Sigmoid colon (tissue), 7 donors: ENCODE measurements at regions of chr4 and their contacts with region 1.

Region 1: DNA sequence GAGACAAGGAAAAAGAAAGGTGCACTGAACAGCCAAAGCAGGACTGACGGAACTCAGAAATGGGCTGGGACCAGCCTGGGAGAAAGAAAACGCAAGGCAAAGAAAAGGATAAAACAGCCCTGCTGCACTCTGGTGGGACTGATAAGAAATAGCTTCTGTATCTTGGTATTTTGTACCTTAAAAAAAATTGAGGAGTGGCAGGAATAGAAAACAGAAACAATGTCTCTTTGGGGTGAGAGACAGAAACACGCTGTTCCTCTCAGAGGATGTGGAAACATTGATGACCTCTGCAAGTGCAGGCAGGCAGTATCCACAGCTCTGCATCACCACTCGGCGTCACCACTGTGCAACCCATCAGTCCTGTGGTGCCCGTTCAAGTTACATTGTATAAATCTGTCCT is 152.5 kb upstream of the SPRY1 start:
- DNase-seq: peak; percentile 77
- H3K4me3 ChIP-seq: no peak overlapping the region
- H3K27ac ChIP-seq: no peak overlapping the region
- H3K4me1 ChIP-seq: peaks cover 0 to 38% (median 25%) of the 10 kb centered on the region in 4 donors
- H3K27me3 ChIP-seq: no peaks in the 10 kb centered on the region
- CTCF ChIP-seq: no peak
- EP300 ChIP-seq: peak in 2 of 4 donors; percentile 20 to 50
- POLR2A ChIP-seq: no peak

Region 2: DNA sequence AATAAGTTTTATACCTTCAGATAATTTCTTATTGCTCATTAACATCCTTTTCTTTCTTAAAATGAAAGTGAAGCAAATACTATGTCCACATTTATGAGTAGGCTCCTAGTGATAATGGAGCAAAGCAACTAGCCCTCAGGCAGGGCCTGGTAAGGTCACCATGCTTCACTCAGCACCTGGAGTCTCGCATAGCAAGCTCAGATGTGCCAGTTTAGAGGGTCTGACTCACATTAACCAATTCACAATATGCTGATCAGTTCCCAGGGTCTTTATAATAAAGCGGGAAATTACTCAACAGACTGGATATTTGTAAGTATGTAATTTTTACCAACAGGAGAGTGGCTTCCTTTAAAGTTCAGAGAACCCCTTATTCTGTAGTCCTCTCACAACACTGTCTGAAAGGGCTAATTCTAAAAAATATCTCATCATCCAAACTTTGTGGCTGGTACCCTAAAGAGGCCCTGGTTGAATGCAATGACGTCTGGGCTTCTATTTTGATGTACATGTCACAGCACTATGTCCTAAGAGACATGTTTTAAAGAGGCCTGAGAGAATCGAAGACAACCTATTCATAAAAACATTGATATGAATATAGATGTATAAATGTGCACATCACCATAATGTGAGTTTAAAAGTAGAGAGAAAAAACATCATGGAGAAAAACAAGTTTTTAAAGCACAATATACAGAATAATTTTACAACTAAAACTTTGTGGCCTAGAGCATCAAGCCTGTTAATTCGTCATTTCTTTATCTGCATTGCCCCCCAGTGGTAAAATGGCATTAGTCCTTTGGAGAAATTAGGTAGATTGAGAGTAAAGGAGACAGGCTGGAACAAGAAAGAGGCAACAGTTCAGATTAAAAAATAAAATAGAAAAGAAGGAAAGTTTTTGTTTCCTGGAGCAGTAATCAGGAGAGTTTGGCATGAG is 667.6 kb before region 1 on chr4:
- intact Hi-C with region 1: no loop called
- DNase-seq: no peak
- H3K4me3 ChIP-seq: no peak overlapping the region
- H3K27ac ChIP-seq: no peak overlapping the region
- H3K4me1 ChIP-seq: no peaks in the 10 kb centered on the region
- H3K27me3 ChIP-seq: no peaks in the 10 kb centered on the region
- CTCF ChIP-seq: peak in 3 of 4 experiments; percentile 10 to 16 (median 13)
- EP300 ChIP-seq: no peak
- POLR2A ChIP-seq: no peak

Region 3: DNA sequence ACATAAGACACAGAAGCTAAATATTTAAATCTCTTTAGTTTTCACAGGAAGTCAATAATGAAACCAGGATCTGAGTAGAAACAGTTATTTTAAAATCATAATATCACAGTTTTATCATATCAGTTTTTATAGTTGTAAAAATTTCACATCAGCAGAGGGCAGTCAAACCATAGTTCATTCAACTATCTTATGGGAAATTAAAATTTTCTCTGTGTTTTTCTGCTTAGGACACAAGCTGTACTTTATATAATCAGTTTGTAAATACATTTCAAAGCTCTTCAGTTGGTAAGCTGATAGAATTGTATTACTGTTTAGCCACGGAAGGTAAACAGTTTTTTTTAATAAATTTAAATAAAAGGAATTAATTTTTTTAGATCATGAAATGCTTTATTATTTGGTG is 116.9 kb before region 1 on chr4:
- intact Hi-C with region 1: loop called (anchors 10 kb)
- DNase-seq: no peak
- H3K4me3 ChIP-seq: no peak overlapping the region
- H3K27ac ChIP-seq: no peak overlapping the region
- H3K4me1 ChIP-seq: no peaks in the 10 kb centered on the region
- H3K27me3 ChIP-seq: no peaks in the 10 kb centered on the region
- CTCF ChIP-seq: peak in 1 of 4 experiments; percentile 17
- EP300 ChIP-seq: no peak
- POLR2A ChIP-seq: no peak